Activated T-helper 2 cell treated with anti-CD3 and anti-CD28 coated beads, Interferon-gamma antibody, Interleukin-2, Interleukin-4, amounts not matched to agents 10 μg/mL and 5 μg/mL and 100 μg/mL, durations not matched to agents 14 hours and 24 hours and 36 hours (primary cell): ENCODE measurements at regions of chr11 and their contacts with region 1.

Region 1: DNA sequence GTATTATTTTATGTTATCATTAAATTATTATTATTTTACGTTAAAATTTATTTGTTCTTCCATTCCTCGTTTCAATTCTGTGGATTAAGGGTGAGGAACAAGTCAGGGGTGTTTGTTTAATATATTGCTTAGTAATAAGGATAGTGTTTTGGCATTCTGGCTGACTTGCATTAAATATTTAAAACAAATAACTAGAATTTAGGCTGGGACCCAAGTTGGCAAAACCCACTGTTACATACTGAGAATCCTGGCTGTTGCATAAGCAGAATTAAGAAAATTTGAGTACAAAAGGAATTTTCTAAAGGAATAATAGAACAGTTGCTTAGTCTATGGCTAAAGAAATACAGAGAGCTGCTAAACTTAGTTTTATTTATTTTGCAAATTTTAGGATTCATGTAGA is 196.4 kb downstream of the GUCY1A2 start:
- DNase-seq: no peak
- H3K4me3 Mint-ChIP-seq: no peak overlapping the region
- H3K27ac Mint-ChIP-seq: no peak overlapping the region
- H3K4me1 Mint-ChIP-seq: no peaks in the 10 kb centered on the region
- H3K27me3 Mint-ChIP-seq: no peaks in the 10 kb centered on the region

Region 2: DNA sequence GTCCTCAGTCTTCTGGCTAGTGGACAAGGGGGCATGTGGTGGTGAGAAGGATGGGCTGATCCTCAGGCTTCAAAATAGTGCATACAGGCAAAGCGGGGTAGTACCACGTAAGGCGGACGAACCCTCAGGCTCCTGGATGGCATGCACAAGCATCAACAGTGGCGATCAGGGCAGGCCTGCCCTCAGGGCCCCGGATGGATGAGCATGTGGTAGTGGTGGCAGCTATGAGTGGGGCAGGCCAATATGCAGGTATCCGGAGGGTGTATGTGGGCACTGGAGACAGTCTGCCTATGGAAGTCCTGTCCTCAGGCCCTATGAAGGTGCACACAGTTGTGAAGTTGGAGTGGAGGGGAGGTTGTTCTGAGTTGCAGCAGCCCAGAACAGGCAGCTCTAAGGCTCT is 32.6 kb after region 1 on chr11:
- intact Hi-C with region 1: loop called (anchors 1 kb)
- DNase-seq: no peak
- H3K4me3 Mint-ChIP-seq: no peak overlapping the region
- H3K27ac Mint-ChIP-seq: no peak overlapping the region
- H3K4me1 Mint-ChIP-seq: no peaks in the 10 kb centered on the region
- H3K27me3 Mint-ChIP-seq: no peaks in the 10 kb centered on the region